Caco-2 (cell line): ENCODE measurements at regions of chr4 and their contacts with region 1.

Region 1: DNA sequence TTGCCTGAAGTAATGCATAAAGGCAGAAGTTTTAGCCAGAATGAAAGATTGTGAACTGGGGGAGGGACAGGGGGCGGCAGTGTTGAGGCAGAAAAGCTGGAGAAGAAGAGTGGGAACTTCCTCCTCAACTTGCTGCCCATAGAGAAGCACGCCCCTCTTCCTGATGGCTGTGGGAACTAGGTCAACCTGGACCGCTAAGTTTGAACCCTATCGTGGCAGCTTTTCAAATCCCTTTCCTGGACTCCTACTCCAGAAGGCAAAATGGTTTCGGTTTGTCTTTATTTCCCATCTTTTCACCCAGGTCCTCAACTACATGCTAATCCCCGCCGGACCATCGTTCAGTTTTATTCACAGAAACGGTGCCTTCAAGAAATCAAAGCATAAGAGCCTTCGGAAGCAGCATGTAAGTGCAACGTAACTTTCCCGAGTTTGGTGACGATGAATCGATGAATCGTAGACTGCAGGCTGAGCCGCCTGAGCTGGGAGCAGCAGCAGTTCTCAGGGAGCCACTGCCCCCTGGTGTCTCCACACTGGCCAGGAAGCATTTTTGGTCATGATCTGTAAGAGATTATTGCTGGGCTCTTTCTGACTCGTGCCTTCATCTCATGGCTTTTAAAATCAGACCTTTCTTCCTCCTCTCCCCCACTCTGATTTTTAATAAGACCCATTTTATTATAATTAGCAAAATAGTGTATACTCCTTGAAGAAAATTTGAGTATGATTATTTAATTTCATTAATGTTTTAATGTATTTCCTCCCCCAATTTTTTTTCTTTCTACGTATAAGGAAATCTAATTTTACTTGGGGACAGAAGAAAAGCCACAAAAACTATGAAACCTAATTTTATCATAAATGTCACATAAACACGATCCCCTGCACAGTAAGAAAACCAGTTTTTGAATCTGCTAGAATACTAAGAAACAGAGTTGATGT is 21.4 kb downstream of the SPINK2 start:
- DNase-seq: peak; percentile 79 to 84
- H3K4me3 ChIP-seq: peak overlapping the region; percentile 43
- H3K4me3 Mint-ChIP-seq: peak overlapping the region; percentile 96
- H3K27ac Mint-ChIP-seq: peak overlapping the region; percentile 79
- H3K4me1 ChIP-seq: no peaks in the 10 kb centered on the region
- H3K4me1 Mint-ChIP-seq: no peaks in the 10 kb centered on the region
- H3K27me3 ChIP-seq: no peaks in the 10 kb centered on the region
- H3K27me3 Mint-ChIP-seq: no peaks in the 10 kb centered on the region
- CTCF ChIP-seq: peak; percentile 89 to 90

Region 2: DNA sequence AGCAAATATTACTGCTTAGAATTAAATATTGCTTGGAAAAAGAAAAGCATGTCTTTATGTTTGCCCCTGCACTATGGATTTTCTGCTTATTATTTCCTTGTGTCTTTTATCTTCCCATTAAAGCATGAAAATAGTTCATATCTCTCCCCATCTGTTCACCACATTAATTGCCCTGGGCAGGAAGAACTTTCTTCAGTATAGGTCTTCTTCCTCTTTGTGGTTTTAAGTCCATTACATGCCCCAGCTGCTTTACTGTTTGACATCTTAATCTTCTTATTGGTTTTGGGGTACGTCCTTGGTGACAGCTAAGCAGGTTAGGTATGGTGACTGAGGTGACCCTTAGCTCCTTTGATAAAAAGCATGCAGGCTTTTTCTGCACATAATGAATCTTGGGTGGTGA is 570.1 kb before region 1 on chr4:
- CTCF ChIA-PET with region 1: no interaction called
- POLR2A ChIA-PET with region 1: no interaction called
- intact Hi-C with region 1: no loop called
- DNase-seq: no peak
- H3K4me3 ChIP-seq: no peak overlapping the region
- H3K4me3 Mint-ChIP-seq: no peak overlapping the region
- H3K27ac Mint-ChIP-seq: no peak overlapping the region
- H3K4me1 ChIP-seq: peaks cover 23% of the 10 kb centered on the region
- H3K4me1 Mint-ChIP-seq: peaks cover 26% of the 10 kb centered on the region
- H3K27me3 ChIP-seq: no peaks in the 10 kb centered on the region
- H3K27me3 Mint-ChIP-seq: no peaks in the 10 kb centered on the region
- CTCF ChIP-seq: no peak

Region 3: DNA sequence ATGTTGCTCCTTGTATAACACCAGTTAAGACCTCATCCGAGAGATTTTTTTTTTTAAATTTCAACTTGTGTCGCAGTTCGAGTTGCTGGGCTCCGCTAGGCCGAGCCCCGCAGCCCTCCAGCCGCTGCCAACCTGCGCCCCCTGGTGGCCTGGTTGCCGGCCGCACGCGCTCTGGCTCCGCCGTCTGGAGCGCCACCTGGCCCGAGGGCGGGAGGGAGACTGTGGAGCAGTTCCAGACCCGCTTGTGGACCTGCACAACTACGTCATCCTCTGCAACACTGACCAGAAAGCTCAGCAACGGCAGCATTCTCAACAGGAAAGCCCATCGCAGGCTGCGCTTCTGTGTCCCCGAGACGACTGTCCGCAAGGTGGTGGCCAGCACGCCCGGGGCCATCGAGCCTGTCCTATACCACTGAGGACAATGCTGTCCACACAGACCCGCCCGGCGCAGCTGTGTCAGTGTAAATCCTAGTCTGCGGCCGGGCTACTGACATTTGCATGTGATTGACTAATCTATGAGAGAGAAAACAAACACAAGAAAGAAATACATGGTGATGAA is 255.4 kb before region 1 on chr4:
- CTCF ChIA-PET with region 1: interaction called, 5 read pairs
- POLR2A ChIA-PET with region 1: no interaction called
- intact Hi-C with region 1: loop called (anchors 1 kb)
- DNase-seq: peak; percentile 83 to 95
- H3K4me3 ChIP-seq: peak overlapping the region; percentile 30
- H3K4me3 Mint-ChIP-seq: peak overlapping the region; percentile 73
- H3K27ac Mint-ChIP-seq: no peak overlapping the region
- H3K4me1 ChIP-seq: 0 out of 2 replicates have a peak, but pooled peaks cover 4% of the 10 kb centered on the region
- H3K4me1 Mint-ChIP-seq: peaks cover 5% of the 10 kb centered on the region
- H3K27me3 ChIP-seq: no peaks in the 10 kb centered on the region
- H3K27me3 Mint-ChIP-seq: peaks cover 8% of the 10 kb centered on the region
- CTCF ChIP-seq: peak; percentile 87 to 94

Region 4: GRCh38 chr4:56668298-56668697 is 131.8 kb before region 1 on chr4:
- CTCF ChIA-PET with region 1: interaction called, 10 read pairs
- POLR2A ChIA-PET with region 1: no interaction called
- intact Hi-C with region 1: loop called (anchors 1 kb)
- DNase-seq: peak in 1 of 2 experiments; percentile 27
- H3K4me3 ChIP-seq: no peak overlapping the region
- H3K4me3 Mint-ChIP-seq: no peak overlapping the region
- H3K27ac Mint-ChIP-seq: no peak overlapping the region
- H3K4me1 ChIP-seq: no peaks in the 10 kb centered on the region
- H3K4me1 Mint-ChIP-seq: no peaks in the 10 kb centered on the region
- H3K27me3 ChIP-seq: no peaks in the 10 kb centered on the region
- H3K27me3 Mint-ChIP-seq: peaks cover 2% of the 10 kb centered on the region
- CTCF ChIP-seq: peak; percentile 44 to 54

Region 5: GRCh38 chr4:56705966-56706365 is 94.1 kb before region 1 on chr4:
- CTCF ChIA-PET with region 1: no interaction called
- POLR2A ChIA-PET with region 1: no interaction called
- intact Hi-C with region 1: loop called (anchors 1 kb)
- DNase-seq: no peak
- H3K4me3 ChIP-seq: no peak overlapping the region
- H3K4me3 Mint-ChIP-seq: no peak overlapping the region
- H3K27ac Mint-ChIP-seq: no peak overlapping the region
- H3K4me1 ChIP-seq: peaks cover 7% of the 10 kb centered on the region; the same call in 1 of the 2 replicates
- H3K4me1 Mint-ChIP-seq: no peaks in the 10 kb centered on the region
- H3K27me3 ChIP-seq: no peaks in the 10 kb centered on the region
- H3K27me3 Mint-ChIP-seq: peaks cover 3% of the 10 kb centered on the region
- CTCF ChIP-seq: no peak

Region 6: DNA sequence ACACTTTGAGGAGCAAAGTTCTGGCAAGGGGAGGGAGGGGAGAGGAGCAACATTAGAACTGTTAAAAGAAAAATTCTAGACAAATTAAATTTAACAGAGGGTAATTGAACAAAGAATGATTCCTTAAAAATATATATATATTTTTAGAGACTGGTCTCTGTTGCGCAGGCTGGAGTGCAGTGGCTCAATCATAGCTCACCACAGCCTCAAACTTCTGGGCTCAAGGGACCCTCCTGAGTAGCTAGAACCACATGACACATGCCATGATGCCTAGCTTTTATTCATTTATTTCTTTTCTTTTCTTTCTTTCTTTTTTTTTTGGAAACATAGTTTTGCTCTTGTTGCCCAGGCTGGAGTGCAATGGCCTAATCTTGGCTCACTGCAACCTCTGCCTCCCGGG is 40.5 kb after region 1 on chr4:
- CTCF ChIA-PET with region 1: interaction called, 11 read pairs
- POLR2A ChIA-PET with region 1: no interaction called
- intact Hi-C with region 1: loop called (anchors 1 kb)
- DNase-seq: no peak
- H3K4me3 ChIP-seq: no peak overlapping the region
- H3K4me3 Mint-ChIP-seq: no peak overlapping the region
- H3K27ac Mint-ChIP-seq: no peak overlapping the region
- H3K4me1 ChIP-seq: no peaks in the 10 kb centered on the region
- H3K4me1 Mint-ChIP-seq: no peaks in the 10 kb centered on the region
- H3K27me3 ChIP-seq: no peaks in the 10 kb centered on the region
- H3K27me3 Mint-ChIP-seq: no peaks in the 10 kb centered on the region
- CTCF ChIP-seq: no peak